ENCODE measurements at regions of chr18 and their contacts with region 1.

Region 1: GRCh38 chr18:75489493-75490190 is 62.1 kb upstream of the SMIM21 start:
- DNase-seq: no peak
- H3K4me3 ChIP-seq: no peak overlapping the region
- H3K27ac ChIP-seq: no peak overlapping the region
- H3K4me1 ChIP-seq: no peaks in the 10 kb centered on the region
- H3K27me3 ChIP-seq: no peaks in the 10 kb centered on the region
- CTCF ChIP-seq: no peak
- POLR2A ChIP-seq: no peak

Region 2: DNA sequence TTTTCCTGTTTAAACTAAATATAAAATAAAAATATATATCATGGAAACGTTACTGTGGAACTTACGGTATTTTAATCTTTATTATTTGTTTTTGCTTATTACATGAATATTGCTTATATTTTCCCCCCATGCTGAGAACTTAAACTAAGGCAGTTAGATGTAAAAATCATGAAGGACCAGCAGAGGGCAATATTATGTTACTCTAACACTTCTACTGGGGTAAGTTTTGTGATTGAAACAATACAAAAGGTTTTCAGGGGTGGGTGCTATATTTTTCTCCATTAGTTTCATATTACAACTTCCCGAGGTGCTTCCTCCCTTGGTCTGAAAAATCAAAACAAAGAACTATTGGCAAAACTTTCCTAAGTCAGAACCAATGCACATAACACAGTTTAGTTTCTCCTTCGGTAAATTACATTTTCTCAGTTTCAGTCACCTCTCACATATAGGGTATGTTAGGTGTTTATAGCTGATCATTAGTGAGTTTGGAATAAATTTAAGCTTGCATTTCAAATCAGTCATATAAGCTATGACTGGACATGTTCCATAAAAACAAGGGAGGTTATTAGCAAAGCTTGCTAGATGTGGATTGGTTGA is 837.2 kb before region 1 on chr18:
- intact Hi-C with region 1: loop called (anchors 10 kb)
- DNase-seq: no peak
- H3K4me3 ChIP-seq: no peak overlapping the region
- H3K27ac ChIP-seq: no peak overlapping the region
- H3K4me1 ChIP-seq: no peaks in the 10 kb centered on the region
- H3K27me3 ChIP-seq: no peaks in the 10 kb centered on the region
- CTCF ChIP-seq: peak in 3 of 6 experiments; percentile 53 to 63 (median 61)
- POLR2A ChIP-seq: no peak

Region 3: GRCh38 chr18:75406491-75407445 is 82.9 kb before region 1 on chr18:
- intact Hi-C with region 1: no loop called
- DNase-seq: no peak
- H3K4me3 ChIP-seq: no peak overlapping the region
- H3K27ac ChIP-seq: no peak overlapping the region
- H3K4me1 ChIP-seq: no peaks in the 10 kb centered on the region
- H3K27me3 ChIP-seq: no peaks in the 10 kb centered on the region
- CTCF ChIP-seq: no peak
- POLR2A ChIP-seq: no peak

Region 4: DNA sequence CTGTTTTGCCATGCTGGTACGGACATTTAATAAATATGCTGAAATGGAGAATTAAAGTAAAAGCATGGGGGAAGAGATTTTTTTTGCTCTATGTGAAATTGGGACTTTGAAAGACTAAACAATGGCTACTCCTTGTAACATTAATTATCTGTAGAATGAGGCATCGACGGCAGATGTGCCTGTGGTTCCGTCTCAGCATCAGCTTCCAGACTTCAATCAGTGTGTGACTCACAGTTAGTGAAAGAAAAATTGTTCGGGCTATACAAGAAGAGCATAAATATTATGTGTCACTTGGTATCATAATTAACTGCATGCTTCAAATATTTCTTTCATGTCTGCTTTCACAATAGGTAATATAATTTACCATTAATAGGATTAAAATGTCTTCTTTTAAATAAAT is 54.9 kb after region 1 on chr18:
- intact Hi-C with region 1: no loop called
- DNase-seq: no peak
- H3K4me3 ChIP-seq: no peak overlapping the region
- H3K27ac ChIP-seq: no peak overlapping the region
- H3K4me1 ChIP-seq: no peaks in the 10 kb centered on the region
- H3K27me3 ChIP-seq: no peaks in the 10 kb centered on the region
- CTCF ChIP-seq: no peak
- POLR2A ChIP-seq: no peak

Measured in thyroid gland (tissue), 4 donors.